ENCODE measurements at regions of chr18 and their contacts with region 1.

Region 1: GRCh38 chr18:23918401-23919032 is 96.0 kb upstream of the TTC39C start:
- DNase-seq: peak; percentile 81
- H3K4me3 ChIP-seq: no peak overlapping the region
- H3K27ac ChIP-seq: no peak overlapping the region
- H3K4me1 ChIP-seq: peaks cover 0 to 8% (median 0%) of the 10 kb centered on the region in 4 donors
- H3K27me3 ChIP-seq: no peaks in the 10 kb centered on the region
- CTCF ChIP-seq: peak; percentile 75 to 84 (median 83)
- EP300 ChIP-seq: no peak
- POLR2A ChIP-seq: no peak

Region 2: GRCh38 chr18:23619388-23619881 is 299.1 kb before region 1 on chr18:
- in situ Hi-C with region 1: loop called in 1 of 4 experiments (anchors 25 kb)
- intact Hi-C with region 1: no loop called
- DNase-seq: peak; percentile 17
- H3K4me3 ChIP-seq: peak overlapping the region in 3 of 4 donors; percentile 16 to 52 (median 35)
- H3K27ac ChIP-seq: peak overlapping the region in 3 of 4 donors; percentile 8 to 44 (median 21)
- H3K4me1 ChIP-seq: peaks cover 0 to 24% (median 16%) of the 10 kb centered on the region in 4 donors
- H3K27me3 ChIP-seq: peaks cover 32% of the 10 kb centered on the region
- CTCF ChIP-seq: no peak
- EP300 ChIP-seq: no peak
- POLR2A ChIP-seq: no peak

Region 3: DNA sequence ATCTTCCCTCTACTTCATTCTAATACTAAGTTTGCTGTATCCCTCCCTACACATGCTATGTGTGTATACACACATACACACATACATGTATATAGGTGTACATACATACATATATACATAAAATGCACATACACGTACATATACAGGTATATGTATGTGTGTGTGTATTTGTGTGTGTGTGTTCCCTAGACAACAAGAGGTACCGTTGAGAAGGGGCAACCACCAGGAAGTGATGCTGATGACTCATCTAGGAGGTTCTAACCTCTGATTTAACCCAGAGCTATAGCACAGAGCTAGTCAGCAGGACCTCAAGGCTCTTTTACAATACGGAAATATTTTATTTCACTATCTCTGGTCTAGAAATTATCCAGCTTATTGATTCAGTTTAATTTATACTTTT is 90.1 kb before region 1 on chr18:
- in situ Hi-C with region 1: loop called in 2 of 4 experiments (anchors 10 kb)
- intact Hi-C with region 1: no loop called
- DNase-seq: no peak
- H3K4me3 ChIP-seq: no peak overlapping the region
- H3K27ac ChIP-seq: no peak overlapping the region
- H3K4me1 ChIP-seq: peaks cover 0 to 24% (median 4%) of the 10 kb centered on the region in 4 donors
- H3K27me3 ChIP-seq: no peaks in the 10 kb centered on the region
- CTCF ChIP-seq: no peak
- EP300 ChIP-seq: no peak
- POLR2A ChIP-seq: no peak

Region 4: DNA sequence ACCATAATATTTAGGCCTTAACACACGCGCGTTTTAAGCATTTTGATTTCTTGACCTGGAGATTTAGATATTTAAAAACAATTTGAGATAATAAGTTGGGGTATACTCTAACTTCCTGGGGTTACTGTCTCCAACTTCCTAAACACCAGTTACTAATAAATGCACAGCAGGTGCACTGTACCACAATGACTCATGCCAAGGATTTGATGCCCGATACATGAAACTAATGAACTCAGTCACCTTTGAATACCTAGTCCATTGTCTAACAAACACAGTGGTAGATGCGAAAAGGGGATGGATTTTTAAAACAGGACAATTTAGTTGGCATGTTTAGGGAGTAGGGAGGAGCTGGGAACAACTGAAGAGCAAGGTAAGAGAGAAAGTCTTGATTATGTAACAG is 241.6 kb after region 1 on chr18:
- in situ Hi-C with region 1: no loop called
- intact Hi-C with region 1: no loop called
- DNase-seq: no peak
- H3K4me3 ChIP-seq: no peak overlapping the region
- H3K27ac ChIP-seq: no peak overlapping the region
- H3K4me1 ChIP-seq: no peaks in the 10 kb centered on the region
- H3K27me3 ChIP-seq: no peaks in the 10 kb centered on the region
- CTCF ChIP-seq: no peak
- EP300 ChIP-seq: no peak
- POLR2A ChIP-seq: no peak

Region 5: GRCh38 chr18:24817587-24818371 is 899.3 kb after region 1 on chr18:
- in situ Hi-C with region 1: no loop called
- intact Hi-C with region 1: no loop called
- DNase-seq: no peak
- H3K4me3 ChIP-seq: no peak overlapping the region
- H3K27ac ChIP-seq: no peak overlapping the region
- H3K4me1 ChIP-seq: no peaks in the 10 kb centered on the region
- H3K27me3 ChIP-seq: no peaks in the 10 kb centered on the region
- CTCF ChIP-seq: no peak
- EP300 ChIP-seq: no peak
- POLR2A ChIP-seq: no peak